Activated naive CD8-positive, alpha-beta T cell treated with anti-CD3 and anti-CD28 coated beads, Interleukin-2, amount 10 ng/mL, durations not matched to agents 7 days and 5 days (primary cell): ENCODE measurements at regions of chr16 and their contacts with region 1.

Region 1: DNA sequence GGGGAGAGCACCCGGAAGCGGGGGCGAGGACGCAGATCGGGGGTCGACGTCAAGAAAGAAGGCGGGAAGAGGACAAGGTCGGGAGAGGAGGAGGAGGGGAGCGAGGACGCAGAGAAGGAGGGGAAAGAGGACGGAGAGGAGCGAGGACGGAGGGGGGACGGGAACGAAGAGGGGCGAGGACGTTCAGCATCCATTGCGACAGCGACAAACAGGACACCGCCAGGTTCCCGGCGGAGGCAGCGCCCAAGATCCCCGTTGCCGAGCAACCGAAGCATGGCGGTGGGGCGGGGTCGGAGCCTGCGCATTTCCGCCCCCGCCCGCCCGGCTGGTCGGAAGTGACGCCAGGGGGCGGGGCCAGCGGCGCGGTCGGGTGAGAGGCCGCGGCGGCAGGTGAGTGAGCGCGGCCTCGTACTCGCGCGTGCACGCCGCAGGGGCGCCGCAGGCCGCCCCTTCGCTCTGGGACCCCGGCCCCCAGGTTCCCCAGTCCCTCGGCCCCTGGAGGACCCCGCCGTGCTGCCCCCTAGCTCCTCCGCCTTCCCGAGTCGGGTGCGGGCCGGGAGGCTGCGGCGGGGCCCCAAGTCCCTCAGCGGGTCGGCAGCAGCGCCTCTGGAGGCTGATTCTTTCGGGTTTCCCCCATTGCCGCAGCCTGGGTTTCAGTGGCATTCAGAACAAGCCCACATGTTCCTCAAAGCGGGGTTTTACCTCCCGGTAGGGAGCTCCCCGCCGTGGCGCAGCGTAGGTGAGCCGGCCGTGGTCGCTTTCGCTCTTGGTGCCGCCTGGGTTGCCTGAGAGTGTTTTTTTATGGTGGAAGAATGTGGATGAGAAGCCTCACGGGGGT is at the start of gene FAM234A:
- DNase-seq: peak; percentile 99
- ATAC-seq: peak; percentile 84
- H3K4me3 Mint-ChIP-seq: peak within 1 kb of the TSS; percentile 96
- H3K27ac Mint-ChIP-seq: peak within 1 kb of the TSS; percentile 98
- H3K4me1 Mint-ChIP-seq: peaks cover 14% of the 10 kb centered on the region
- H3K27me3 Mint-ChIP-seq: peaks cover 2% of the 10 kb centered on the region
- total RNA-seq, gene FAM234A: 21.0 to 21.1 TPM

Region 2: DNA sequence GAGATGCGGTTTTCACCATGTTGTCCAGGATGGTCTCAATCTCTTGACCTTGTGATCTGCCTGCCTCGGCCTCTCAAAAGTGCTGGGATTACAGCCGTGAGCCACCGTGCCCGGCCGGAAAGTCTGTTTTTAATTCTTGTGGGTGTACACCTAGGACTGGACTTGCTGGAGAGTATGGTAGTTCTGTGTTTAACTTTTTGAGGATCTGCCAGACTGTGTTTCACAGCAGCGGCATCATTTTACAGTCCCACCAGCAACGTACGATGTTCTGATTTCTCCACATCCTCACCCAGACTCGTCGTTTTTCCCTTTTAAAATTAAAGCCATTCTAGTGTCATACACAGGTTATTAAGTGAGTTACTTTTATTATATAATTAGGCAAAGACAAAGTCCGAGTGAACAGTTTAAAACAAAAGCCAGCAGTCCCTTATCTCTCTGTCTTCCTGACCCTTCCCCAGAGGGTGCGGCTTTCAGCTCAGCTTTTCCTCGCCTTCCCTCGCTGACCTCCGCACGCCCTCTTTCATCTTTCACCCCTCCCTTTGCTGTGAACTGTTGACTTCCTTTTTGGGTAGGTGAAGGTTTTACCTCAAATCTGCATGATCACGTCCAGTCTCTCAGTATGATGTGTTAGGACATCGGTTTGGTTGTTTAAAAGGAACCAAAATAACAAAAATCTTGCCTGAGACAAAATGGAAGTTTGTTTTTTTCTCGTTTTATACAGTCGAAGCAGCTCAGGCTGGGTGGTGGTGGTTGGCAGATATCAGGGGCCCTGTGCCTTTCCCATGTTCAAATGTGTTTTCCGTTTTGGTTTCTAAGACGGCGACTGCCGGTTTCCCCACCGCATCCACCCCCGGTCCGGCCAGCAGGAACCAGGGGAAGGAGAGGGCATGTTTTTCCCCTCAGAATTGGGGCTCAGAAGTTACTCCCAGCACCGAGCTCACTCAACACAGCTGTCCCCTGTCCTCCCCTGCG is 18.0 kb after region 1 on chr16:
- POLR2A ChIA-PET with region 1: interaction called, 12 read pairs
- DNase-seq: no peak
- ATAC-seq: peak; percentile 73
- H3K4me3 Mint-ChIP-seq: peak overlapping the region; percentile 87
- H3K27ac Mint-ChIP-seq: peak overlapping the region; percentile 89
- H3K4me1 Mint-ChIP-seq: peaks cover 26% of the 10 kb centered on the region
- H3K27me3 Mint-ChIP-seq: no peaks in the 10 kb centered on the region